ENCODE measurements at regions of chr4 and their contacts with region 1.

Region 1: GRCh38 chr4:71147261-71147660 is 153.8 kb downstream of the DCK start:
- DNase-seq: no peak

Region 2: GRCh38 chr4:71160861-71161348 is 13.6 kb after region 1 on chr4:
- intact Hi-C with region 1: loop called in 1 of 2 experiments (anchors 2 kb)
- DNase-seq: no peak

Measured in posterior vena cava (tissue), 2 donors.